ENCODE measurements at regions of chr2 and their contacts with region 1.

Region 1: DNA sequence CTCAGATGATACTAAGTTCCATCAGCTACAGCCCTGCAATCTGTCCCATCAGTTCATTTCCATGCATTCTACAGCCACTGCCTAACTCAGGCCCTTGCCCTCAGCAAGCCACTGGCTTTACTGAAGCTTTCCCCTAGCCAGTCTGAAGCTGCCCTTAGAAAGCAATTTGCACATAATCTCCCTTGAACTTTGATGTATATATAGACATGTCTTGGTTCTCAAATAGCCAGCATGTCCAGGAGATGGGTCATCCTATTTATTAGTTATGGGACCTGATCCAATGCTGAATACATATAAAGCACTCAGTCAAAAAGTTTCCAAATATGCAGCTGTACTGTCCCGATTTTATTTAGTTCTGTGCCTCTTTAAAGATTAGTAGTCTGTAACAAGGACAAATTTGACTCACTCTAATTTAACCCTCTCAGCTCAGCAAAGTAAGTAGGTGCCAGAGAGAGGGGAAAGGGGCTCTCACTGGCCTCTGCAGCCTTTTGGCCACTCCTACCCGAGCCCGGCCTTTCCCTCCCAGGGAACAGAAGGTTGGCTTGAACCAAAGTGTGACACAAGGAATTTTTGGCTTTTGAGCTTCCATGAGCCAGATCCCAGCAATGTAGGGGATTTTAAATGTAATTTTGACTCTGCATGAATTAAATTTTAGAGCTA is 70.7 kb downstream of the CCDC93 start:
- DNase-seq: no peak
- H3K4me3 ChIP-seq: no peak overlapping the region
- H3K27ac ChIP-seq: no peak overlapping the region
- H3K4me1 ChIP-seq: no peaks in the 10 kb centered on the region
- H3K27me3 ChIP-seq: no peaks in the 10 kb centered on the region
- CTCF ChIP-seq: no peak

Region 2: DNA sequence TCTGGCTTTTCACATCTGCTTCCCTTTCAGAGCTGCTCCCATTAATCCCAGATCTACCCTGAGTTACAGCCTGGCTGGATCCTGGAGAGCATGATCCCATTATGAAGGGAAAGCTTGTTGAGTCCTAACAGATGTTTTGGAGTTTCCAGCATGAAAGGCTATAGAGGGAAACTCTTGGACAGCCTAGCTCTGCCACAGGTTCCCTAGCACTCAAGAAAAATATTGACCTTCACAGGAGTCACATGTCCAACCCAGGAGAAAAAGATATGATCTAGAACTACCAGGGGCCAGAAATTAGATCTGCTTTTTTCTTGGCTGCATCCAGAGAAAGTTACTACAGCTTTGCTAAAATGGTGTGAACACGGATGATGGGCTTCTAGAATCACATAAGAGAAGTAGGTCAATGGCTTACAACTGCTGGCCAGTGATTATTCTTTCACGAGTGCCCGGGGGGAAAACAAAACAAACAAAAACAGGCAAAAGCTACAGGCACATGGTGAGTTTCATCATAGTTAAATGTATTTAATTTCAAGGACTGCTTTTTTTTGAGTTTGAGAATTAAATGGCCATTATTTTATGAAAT is 54.8 kb after region 1 on chr2:
- intact Hi-C with region 1: loop called (anchors 10 kb)
- DNase-seq: no peak
- H3K4me3 ChIP-seq: no peak overlapping the region
- H3K27ac ChIP-seq: no peak overlapping the region
- H3K4me1 ChIP-seq: no peaks in the 10 kb centered on the region
- H3K27me3 ChIP-seq: no peaks in the 10 kb centered on the region
- CTCF ChIP-seq: no peak

Measured in colonic mucosa (tissue), 4 donors.